Aorta (tissue), 5 donors: ENCODE measurements at regions of chr2 and their contacts with region 1.

Region 1: DNA sequence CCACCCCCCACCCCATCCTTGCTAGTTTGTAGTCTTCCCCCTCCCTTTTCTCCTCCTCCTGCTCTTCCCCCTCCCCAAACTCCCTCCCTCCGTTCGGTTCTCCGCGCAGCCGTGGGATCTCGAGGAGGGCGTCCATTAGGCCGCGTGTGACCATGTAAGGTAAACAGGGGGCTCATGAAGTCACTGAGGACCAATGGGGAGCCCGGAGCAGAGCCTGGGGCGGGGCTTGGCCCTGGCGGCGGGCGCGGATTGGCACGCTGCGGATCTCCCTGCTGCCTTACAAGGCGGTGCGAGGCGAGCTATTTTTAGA is 246 bp upstream of the KLF7 start:
- DNase-seq: peak; percentile 99
- ATAC-seq: peak; percentile 95
- H3K4me3 ChIP-seq: peak overlapping the region; percentile 70
- H3K27ac ChIP-seq: peak overlapping the region in 1 of 2 donors; percentile 100
- H3K4me1 ChIP-seq: peaks cover 1 to 5% of the 10 kb centered on the region in 2 donors
- H3K27me3 ChIP-seq: no peaks in the 10 kb centered on the region

Region 2: DNA sequence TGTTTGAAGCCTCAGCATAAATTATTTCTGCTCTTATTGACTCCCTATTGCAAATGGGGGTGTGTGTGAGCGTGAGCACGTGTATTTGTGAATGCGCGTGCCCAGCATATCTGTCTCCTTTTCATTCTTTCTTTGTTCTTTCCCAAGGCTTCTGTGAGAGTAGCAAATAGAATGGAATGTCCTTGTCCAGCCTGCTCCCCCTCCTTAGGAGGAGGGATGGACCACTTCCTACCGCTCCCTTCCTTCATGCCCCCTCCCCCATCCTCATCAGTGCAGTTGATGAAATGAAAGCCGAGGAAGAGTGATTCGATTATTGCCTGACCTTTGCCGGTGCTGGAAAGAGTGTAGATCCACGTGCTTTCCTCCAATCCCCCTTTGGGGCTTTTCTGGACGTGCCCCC is 124.7 kb before region 1 on chr2:
- intact Hi-C with region 1: loop called (anchors 5 kb)
- DNase-seq: no peak
- ATAC-seq: no peak
- H3K4me3 ChIP-seq: peak overlapping the region in 1 of 2 donors; percentile 66
- H3K27ac ChIP-seq: peak overlapping the region in 1 of 2 donors; percentile 78
- H3K4me1 ChIP-seq: peaks cover 3 to 9% of the 10 kb centered on the region in 2 donors
- H3K27me3 ChIP-seq: no peaks in the 10 kb centered on the region

Region 3: DNA sequence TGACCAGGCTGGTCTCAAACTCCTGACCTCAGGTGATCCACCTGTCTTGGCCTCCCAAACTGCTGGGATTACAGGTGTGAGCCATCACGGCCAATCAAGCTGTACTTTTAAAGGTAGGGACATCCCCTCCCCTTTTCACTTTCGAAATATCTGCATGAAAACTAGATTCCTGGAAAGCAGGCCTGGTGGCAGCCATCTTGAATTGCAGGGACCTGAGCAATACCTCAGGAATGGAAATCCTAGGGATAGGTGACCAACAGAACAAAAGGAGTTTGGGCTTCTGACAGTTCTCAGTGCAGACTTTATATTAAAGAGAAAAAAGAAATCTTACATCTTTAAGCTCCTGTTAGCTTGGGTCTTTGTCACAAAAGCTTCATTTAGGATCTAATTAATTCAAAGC is 62.9 kb before region 1 on chr2:
- intact Hi-C with region 1: no loop called
- DNase-seq: no peak
- ATAC-seq: no peak
- H3K4me3 ChIP-seq: no peak overlapping the region
- H3K27ac ChIP-seq: no peak overlapping the region
- H3K4me1 ChIP-seq: peaks cover 2 to 8% of the 10 kb centered on the region in 2 donors
- H3K27me3 ChIP-seq: no peaks in the 10 kb centered on the region

Region 4: GRCh38 chr2:207115715-207116364 is 50.2 kb before region 1 on chr2:
- intact Hi-C with region 1: no loop called
- DNase-seq: no peak
- ATAC-seq: peak; percentile 60
- H3K4me3 ChIP-seq: no peak overlapping the region
- H3K27ac ChIP-seq: no peak overlapping the region
- H3K4me1 ChIP-seq: peaks cover 0 to 4% of the 10 kb centered on the region in 2 donors
- H3K27me3 ChIP-seq: no peaks in the 10 kb centered on the region

Region 5: DNA sequence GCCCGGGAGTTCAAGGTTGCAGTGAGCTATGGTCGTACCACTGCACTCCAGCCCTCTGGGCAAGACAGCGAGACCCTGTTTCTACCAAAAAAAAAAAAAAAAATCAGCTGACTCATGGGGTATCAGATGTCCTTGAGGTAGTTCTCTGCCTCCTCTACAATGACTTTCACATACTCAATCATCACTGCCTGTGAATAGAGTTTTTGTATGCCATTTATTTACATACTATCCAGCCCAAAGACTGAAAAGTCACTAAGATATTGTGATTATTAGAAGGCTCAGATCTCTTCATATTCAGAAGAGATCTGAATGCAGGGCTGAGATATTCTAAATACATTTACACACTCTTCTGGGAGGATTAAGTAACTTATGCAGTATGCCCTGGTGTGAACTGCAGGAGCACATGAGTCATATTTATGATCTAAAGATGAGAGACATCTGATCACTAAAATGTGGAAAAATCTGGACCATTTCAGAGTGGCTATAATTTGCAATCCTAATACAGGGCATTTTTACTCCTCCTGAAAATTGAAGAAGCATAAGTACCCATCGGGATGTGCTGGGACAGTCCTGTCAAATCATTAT is 39.2 kb before region 1 on chr2:
- intact Hi-C with region 1: loop called in 1 of 2 experiments (anchors 5 kb)
- DNase-seq: no peak
- ATAC-seq: no peak
- H3K4me3 ChIP-seq: no peak overlapping the region
- H3K27ac ChIP-seq: no peak overlapping the region
- H3K4me1 ChIP-seq: peaks cover 1 to 7% of the 10 kb centered on the region in 2 donors
- H3K27me3 ChIP-seq: no peaks in the 10 kb centered on the region

Region 6: DNA sequence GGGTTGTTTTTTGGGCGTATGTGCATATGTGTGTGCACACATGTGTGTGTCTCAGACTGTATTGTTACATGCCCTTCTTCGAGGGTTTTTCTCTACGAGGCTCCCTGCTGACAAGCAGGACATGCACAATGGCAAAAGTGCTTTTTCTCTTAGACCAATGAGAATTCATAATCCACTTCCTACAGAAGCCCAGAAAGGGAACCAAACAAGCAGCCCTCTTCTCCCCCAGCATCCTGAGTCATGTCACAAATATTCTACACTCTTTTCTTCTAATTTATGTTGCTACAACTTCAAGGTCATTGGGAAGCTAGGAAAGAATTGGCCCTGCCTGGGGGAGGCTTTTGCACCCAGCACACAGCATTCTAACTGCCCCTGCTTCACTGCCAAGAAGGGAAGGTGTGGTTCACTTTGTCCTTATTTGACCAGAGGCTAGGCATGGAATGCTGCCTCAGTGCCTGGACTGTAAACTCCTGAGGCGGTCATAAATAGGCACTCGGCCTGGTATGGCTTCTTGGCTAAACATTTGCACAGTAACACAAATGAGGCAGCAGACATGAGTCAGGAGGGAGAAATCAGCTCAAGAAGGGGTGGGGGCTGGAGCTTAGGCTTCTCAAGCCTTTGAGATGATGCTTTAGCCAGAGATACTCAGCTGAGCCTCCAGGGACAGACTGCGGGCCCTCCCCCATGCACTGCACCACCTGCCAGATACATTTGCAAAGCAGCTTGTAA is 92.4 kb after region 1 on chr2:
- intact Hi-C with region 1: loop called (anchors 2 to 5 kb)
- DNase-seq: peak; percentile 87 to 88
- ATAC-seq: peak; percentile 85
- H3K4me3 ChIP-seq: no peak overlapping the region
- H3K27ac ChIP-seq: peak overlapping the region; percentile 36 to 83
- H3K4me1 ChIP-seq: peaks cover 0 to 2% of the 10 kb centered on the region in 2 donors
- H3K27me3 ChIP-seq: no peaks in the 10 kb centered on the region

Region 7: DNA sequence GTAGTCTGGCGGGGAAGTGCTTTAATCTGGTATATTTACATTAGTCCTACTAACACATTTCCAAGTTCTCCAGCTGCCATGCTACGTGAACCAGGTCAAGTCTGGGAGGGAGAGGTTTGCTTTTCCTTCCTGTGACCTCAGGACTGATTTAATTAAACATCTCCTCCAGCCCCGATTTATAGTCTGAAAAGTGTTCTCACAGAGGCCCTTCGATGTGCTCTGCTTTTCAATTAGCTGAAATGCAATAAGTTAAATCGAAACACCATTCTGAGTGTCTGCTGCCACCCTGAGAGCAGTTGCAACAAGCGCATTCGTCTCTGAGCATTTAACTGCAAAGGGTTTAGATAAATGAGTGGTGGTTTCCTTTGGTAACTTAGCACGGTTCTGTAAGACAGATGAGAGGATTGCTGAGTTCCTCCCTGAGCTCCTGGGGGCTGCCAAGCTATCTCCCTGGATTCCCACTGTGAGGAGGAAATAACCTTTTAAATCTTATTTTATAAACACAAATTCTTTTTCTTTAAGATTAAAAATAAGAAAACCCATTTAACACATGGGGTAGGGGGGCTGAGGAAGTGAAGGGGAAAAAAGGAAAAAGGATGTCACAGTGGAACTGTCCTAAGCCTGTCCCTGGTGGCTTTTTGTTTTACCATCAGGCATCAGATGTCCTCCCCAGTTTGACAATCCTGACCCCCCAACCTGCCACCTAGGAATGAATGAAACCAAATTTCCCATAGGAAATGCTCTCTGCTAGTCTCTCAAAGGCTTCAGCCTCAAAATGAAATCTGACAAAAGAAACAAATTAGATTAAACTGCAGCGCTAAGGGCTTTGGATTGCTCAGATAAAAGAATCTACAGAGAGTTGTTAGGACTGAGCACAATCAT is 307.3 kb after region 1 on chr2:
- intact Hi-C with region 1: loop called (anchors 5 kb)
- DNase-seq: no peak
- ATAC-seq: peak; percentile 79
- H3K4me3 ChIP-seq: peak overlapping the region in 1 of 2 donors; percentile 2
- H3K27ac ChIP-seq: no peak overlapping the region
- H3K4me1 ChIP-seq: peaks cover 0 to 2% of the 10 kb centered on the region in 2 donors
- H3K27me3 ChIP-seq: no peaks in the 10 kb centered on the region